Endothelial cell of umbilical vein (primary cell): ENCODE measurements at regions of chr3 and their contacts with region 1.

Region 1: GRCh38 chr3:33218446-33219174 is at the start of gene SUSD5:
- DNase-seq: peak; percentile 56
- H3K4me3 ChIP-seq: peak within 1 kb of the TSS; percentile 39 to 71 (median 54)
- H3K27ac ChIP-seq: peak within 1 kb of the TSS; percentile 28
- H3K4me1 ChIP-seq: peaks cover 13% of the 10 kb centered on the region
- H3K27me3 ChIP-seq: peaks cover 0 to 10% of the 10 kb centered on the region in 2 experiments
- CTCF ChIP-seq: no peak
- POLR2A ChIP-seq: peak; percentile 17
- total RNA-seq, gene SUSD5: 15.3 and 18.8 TPM in 2 replicates

Region 2: DNA sequence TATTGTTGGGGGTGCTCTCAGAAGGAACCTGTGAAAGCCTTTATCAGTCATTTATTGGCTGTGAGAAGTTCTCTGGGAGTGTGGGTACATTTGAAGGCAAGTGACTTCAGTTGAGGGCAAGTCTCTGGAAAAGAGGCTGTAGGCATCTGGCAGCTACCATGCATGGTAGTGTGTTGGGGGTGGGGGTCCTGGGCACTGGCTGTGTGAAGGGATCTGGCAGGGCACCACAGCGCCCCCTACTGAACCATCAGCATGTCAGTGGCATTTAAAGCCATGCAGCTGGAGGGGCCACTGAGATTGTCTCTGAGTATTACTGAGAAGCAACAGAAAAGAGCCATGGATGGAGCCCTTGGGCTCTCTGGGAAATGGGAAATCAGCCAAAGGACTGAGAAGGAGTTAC is 74.2 kb before region 1 on chr3:
- CTCF ChIA-PET with region 1: interaction called, 10 read pairs
- POLR2A ChIA-PET with region 1: no interaction called
- dilution Hi-C with region 1: no loop called
- intact Hi-C with region 1: no loop called
- DNase-seq: no peak
- H3K4me3 ChIP-seq: no peak overlapping the region
- H3K27ac ChIP-seq: no peak overlapping the region
- H3K4me1 ChIP-seq: peaks cover 3% of the 10 kb centered on the region
- H3K27me3 ChIP-seq: no peaks in the 10 kb centered on the region
- CTCF ChIP-seq: peak; percentile 26 to 40
- POLR2A ChIP-seq: no peak

Region 3: GRCh38 chr3:33277193-33277882 is 58.7 kb after region 1 on chr3 and contains the start of gene FBXL2:
- CTCF ChIA-PET with region 1: no interaction called
- POLR2A ChIA-PET with region 1: no interaction called
- dilution Hi-C with region 1: no loop called
- intact Hi-C with region 1: loop called (anchors 5 kb)
- DNase-seq: peak; percentile 73
- H3K4me3 ChIP-seq: peak within 1 kb of the TSS; percentile 66 to 93 (median 81)
- H3K27ac ChIP-seq: peak within 1 kb of the TSS; percentile 44
- H3K4me1 ChIP-seq: peaks cover 11% of the 10 kb centered on the region
- H3K27me3 ChIP-seq: no peaks in the 10 kb centered on the region
- CTCF ChIP-seq: no peak
- POLR2A ChIP-seq: peak; percentile 68
- total RNA-seq, gene FBXL2: 21.7 and 26.9 TPM in 2 replicates